ENCODE measurements at regions of chr2 and their contacts with region 1.

Region 1: GRCh38 chr2:26033818-26034636 is at the start of gene RAB10:
- DNase-seq: peak; percentile 96 to 99
- H3K4me3 ChIP-seq: peak within 1 kb of the TSS; percentile 80 to 87
- H3K27ac ChIP-seq: peak within 1 kb of the TSS; percentile 96 to 98
- H3K4me1 ChIP-seq: peaks cover 3 to 24% of the 10 kb centered on the region in 2 donors
- H3K27me3 ChIP-seq: no peaks in the 10 kb centered on the region
- CTCF ChIP-seq: peak in 2 of 3 experiments; percentile 6 to 15
- total RNA-seq, gene RAB10: 181 TPM

Region 2: GRCh38 chr2:25878361-25879132 is 155.5 kb before region 1 on chr2 and contains the start of gene ASXL2:
- intact Hi-C with region 1: loop called (anchors 5 kb)
- DNase-seq: peak; percentile 92 to 98
- H3K4me3 ChIP-seq: peak within 1 kb of the TSS; percentile 70 to 77
- H3K27ac ChIP-seq: peak within 1 kb of the TSS; percentile 81 to 90
- H3K4me1 ChIP-seq: peaks cover 0 to 10% of the 10 kb centered on the region in 2 donors
- H3K27me3 ChIP-seq: no peaks in the 10 kb centered on the region
- CTCF ChIP-seq: no peak
- total RNA-seq, gene ASXL2: 8.7 TPM

Region 3: GRCh38 chr2:25982273-25982967 is 51.6 kb before region 1 on chr2 and contains the start of gene KIF3C:
- intact Hi-C with region 1: loop called (anchors 5 kb)
- DNase-seq: peak in 1 of 2 donors; percentile 81
- H3K4me3 ChIP-seq: peak within 1 kb of the TSS; percentile 86 to 95
- H3K27ac ChIP-seq: peak within 1 kb of the TSS; percentile 4 to 60
- H3K4me1 ChIP-seq: peaks cover 0 to 22% of the 10 kb centered on the region in 2 donors
- H3K27me3 ChIP-seq: no peaks in the 10 kb centered on the region
- CTCF ChIP-seq: no peak
- total RNA-seq, gene KIF3C: 11.9 TPM

Region 4: DNA sequence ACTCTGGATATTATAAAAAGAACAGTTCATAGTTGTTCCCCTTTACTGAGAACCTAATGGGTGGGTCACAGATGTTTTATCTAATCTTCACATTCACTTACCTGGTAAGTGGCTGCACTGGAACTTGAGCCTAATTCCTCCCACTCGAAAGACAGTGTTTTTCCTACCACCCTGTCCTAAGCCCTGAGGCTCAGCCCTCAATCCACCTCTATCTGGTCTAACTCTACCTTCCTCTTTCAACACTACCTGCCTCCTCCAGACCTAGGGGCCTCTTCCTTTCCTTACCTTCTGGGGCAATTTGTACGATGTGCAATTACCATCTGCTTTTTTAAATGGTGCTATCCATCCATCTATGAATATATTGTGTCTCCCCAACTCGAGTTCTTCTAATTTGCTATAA is 42.1 kb before region 1 on chr2:
- intact Hi-C with region 1: loop called (anchors 1 kb)
- DNase-seq: no peak
- H3K4me3 ChIP-seq: no peak overlapping the region
- H3K27ac ChIP-seq: no peak overlapping the region
- H3K4me1 ChIP-seq: peaks cover 0 to 3% of the 10 kb centered on the region in 2 donors
- H3K27me3 ChIP-seq: no peaks in the 10 kb centered on the region
- CTCF ChIP-seq: no peak

Region 5: DNA sequence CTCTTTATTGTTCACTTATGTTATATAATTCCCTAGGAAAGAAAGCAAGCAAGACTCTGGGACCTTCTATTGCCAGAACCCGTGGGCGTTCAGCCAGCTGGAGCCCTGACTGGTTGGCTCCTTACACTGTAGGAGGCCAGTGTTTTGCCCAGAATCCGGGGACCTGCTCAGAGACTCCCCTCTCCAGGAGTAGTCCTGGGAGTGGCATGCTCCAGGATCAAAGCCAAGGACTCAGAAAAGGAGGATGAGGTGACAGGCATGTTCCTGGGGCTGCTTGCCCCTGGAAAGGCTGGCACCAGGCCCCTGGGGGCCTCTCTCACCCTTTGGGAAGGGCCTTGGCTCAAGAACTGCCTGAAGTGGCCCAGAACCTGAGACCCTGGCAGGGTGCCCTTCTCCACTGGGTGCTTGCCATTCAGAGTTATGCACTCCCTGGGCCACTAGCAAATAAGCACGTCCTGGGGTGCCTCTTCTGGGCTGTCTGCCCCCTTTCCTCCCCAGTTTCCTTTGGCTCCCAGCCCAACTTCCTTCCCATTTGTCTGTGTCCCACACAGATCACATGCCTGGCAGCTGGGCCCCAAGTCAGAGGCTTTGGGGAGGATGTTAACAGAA is 32.2 kb before region 1 on chr2:
- intact Hi-C with region 1: loop called (anchors 1 kb)
- DNase-seq: peak in 1 of 2 donors; percentile 85
- H3K4me3 ChIP-seq: peak overlapping the region in 1 of 2 donors; percentile 13
- H3K27ac ChIP-seq: peak overlapping the region; percentile 72 to 78
- H3K4me1 ChIP-seq: peaks cover 21 to 35% of the 10 kb centered on the region in 2 donors
- H3K27me3 ChIP-seq: no peaks in the 10 kb centered on the region
- CTCF ChIP-seq: no peak

Region 6: DNA sequence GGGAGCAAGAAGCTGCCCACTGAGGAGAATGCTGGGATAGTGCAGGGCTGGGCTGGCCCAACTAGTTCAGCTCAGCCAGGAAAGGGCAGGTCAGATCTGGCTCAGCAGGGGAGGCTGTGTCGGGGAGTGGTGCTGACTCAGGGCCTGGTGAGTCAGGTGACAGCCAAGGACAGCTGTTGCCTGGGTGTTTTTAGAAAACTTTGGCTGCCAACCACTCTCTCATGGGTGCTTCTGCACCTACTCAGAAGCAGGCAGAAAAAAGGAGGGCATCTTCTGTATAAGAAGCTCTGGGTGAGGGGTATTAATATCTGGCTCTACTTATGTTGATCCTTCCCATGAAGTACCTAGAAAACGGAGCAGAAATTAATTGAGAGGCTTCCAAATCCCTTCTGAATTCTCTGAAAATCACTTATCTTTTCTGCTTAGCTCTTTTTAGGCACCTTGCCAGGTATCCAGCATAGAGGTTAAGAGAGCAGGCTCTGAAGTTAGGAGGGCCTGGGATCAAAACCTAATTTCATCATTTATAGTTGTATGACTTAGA is 15.8 kb before region 1 on chr2:
- intact Hi-C with region 1: loop called (anchors 2 kb)
- DNase-seq: peak; percentile 70 to 86
- H3K4me3 ChIP-seq: no peak overlapping the region
- H3K27ac ChIP-seq: peak overlapping the region; percentile 13 to 56
- H3K4me1 ChIP-seq: peaks cover 0 to 11% of the 10 kb centered on the region in 2 donors
- H3K27me3 ChIP-seq: no peaks in the 10 kb centered on the region
- CTCF ChIP-seq: no peak

Region 7: GRCh38 chr2:26345545-26346453 is 311.8 kb after region 1 on chr2 and contains the start of gene SELENOI:
- intact Hi-C with region 1: loop called (anchors 5 kb)
- DNase-seq: peak; percentile 96 to 99
- H3K4me3 ChIP-seq: peak within 1 kb of the TSS; percentile 74 to 94
- H3K27ac ChIP-seq: peak within 1 kb of the TSS; percentile 90 to 94
- H3K4me1 ChIP-seq: peaks cover 6 to 20% of the 10 kb centered on the region in 2 donors
- H3K27me3 ChIP-seq: no peaks in the 10 kb centered on the region
- CTCF ChIP-seq: no peak
- total RNA-seq, gene SELENOI: 2.2 TPM

Measured in ascending aorta (tissue), 2 donors.